PC-9 (cell line): ENCODE measurements at regions of chr13 and their contacts with region 1.

Region 1: GRCh38 chr13:23231241-23231640 is 50.5 kb downstream of the SGCG start:
- DNase-seq: no peak
- H3K4me3 ChIP-seq: no peak overlapping the region
- H3K27ac ChIP-seq: no peak overlapping the region
- H3K4me1 ChIP-seq: no peaks in the 10 kb centered on the region
- H3K27me3 ChIP-seq: peaks cover 19% of the 10 kb centered on the region
- CTCF ChIP-seq: no peak

Region 2: GRCh38 chr13:24929196-24929595 is 1698.0 kb after region 1 on chr13:
- CTCF ChIA-PET with region 1: no interaction called
- POLR2A ChIA-PET with region 1: interaction called, 32 read pairs
- intact Hi-C with region 1: no loop called
- DNase-seq: no peak
- H3K4me3 ChIP-seq: no peak overlapping the region
- H3K27ac ChIP-seq: no peak overlapping the region
- H3K4me1 ChIP-seq: 0 out of 2 replicates have a peak, but pooled peaks cover under 1% of the 10 kb centered on the region
- H3K27me3 ChIP-seq: peaks cover 6% of the 10 kb centered on the region; the same call in 1 of the 2 replicates
- CTCF ChIP-seq: no peak